Activated naive CD4-positive, alpha-beta T cell treated with anti-CD3 and anti-CD28 coated beads for 36 hours (primary cell): ENCODE measurements at regions of chr16 and their contacts with region 1.

Region 1: GRCh38 chr16:88452482-88453216 is 431 bp upstream of the ZFPM1 start:
- DNase-seq: peak; percentile 98
- H3K4me3 Mint-ChIP-seq: peak overlapping the region; percentile 78
- H3K27ac Mint-ChIP-seq: peak overlapping the region; percentile 80
- H3K4me1 Mint-ChIP-seq: peaks cover 22% of the 10 kb centered on the region
- H3K27me3 Mint-ChIP-seq: no peaks in the 10 kb centered on the region

Region 2: DNA sequence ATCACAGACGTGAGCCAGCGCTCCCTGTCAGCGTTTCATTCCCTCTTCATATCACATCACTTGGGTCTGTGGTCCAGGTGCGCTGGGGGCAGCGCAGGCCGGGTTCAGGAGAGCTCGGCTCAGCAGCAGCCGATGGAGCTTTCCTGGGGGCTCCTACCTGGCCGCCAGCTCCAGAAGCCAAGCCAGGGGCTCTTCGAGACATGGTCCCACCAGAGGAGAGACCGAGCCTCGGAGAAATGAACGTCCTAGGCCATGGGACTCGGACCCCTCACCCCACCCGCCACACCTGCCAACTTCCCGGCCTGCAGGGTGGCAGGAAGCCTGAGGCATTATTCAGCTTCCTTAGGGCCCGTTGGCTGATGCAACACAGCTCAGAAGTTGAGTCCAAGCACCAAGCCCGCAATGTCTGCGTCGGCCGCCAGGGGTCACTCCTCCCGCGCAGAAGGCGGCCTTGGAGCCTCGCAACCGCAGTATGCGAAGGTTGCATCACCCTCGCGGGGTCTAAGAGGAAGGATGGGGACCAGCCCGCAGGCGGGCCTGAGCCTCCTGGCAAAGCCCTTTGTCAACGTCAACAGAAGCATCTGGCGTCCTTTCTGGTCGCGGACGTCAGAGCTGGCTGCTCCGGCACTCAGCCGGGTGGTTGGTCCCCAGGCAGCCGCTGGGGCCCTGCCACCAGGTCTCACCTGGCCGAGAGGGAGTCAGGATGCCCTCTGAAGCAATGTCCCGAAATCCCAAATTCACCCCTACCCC is 673.6 kb before region 1 on chr16:
- CTCF ChIA-PET with region 1: no interaction called
- intact Hi-C with region 1: loop called (anchors 5 kb)
- DNase-seq: peak; percentile 98
- H3K4me3 Mint-ChIP-seq: peak overlapping the region; percentile 89
- H3K27ac Mint-ChIP-seq: peak overlapping the region; percentile 99
- H3K4me1 Mint-ChIP-seq: peaks cover 48% of the 10 kb centered on the region
- H3K27me3 Mint-ChIP-seq: no peaks in the 10 kb centered on the region

Region 3: DNA sequence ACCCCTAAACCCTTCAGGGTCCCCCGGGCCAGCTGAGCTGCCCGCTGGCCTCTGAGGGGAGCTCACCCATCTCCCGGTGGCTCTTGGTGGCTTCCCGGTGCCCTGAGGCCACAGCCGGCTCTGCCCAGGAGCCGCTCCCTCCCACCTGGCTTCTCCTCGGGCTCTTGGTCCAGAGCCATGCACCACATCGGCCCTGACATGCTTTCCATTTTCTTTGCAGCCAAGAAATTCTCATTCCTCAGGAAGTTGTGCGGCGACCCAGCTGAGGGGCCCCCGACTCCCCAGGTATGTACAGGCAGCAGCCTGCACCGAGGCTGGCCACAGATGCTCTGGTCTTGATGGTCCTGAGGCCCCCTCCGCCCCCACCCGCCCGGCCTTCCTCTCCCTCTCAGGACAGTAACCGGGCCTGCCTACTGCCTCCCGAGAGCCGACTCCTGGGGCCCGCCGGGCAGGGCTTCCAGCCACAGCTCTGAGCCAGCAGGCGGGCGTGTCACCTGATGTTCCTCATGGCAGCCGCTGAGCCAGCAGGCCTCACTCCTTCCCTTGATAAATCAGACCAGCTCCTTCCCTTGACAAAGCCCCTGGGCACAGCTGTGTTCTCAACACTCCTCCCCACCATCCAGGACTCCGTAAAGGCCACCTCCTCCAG is 27.9 kb before region 1 on chr16:
- CTCF ChIA-PET with region 1: no interaction called
- intact Hi-C with region 1: no loop called
- DNase-seq: no peak
- H3K4me3 Mint-ChIP-seq: no peak overlapping the region
- H3K27ac Mint-ChIP-seq: no peak overlapping the region
- H3K4me1 Mint-ChIP-seq: peaks cover under 1% of the 10 kb centered on the region
- H3K27me3 Mint-ChIP-seq: no peaks in the 10 kb centered on the region

Region 4: GRCh38 chr16:88466175-88466862 is 13.7 kb after region 1 on chr16:
- CTCF ChIA-PET with region 1: interaction called, 3 read pairs
- intact Hi-C with region 1: loop called (anchors 1 kb)
- DNase-seq: peak; percentile 36
- H3K4me3 Mint-ChIP-seq: no peak overlapping the region
- H3K27ac Mint-ChIP-seq: no peak overlapping the region
- H3K4me1 Mint-ChIP-seq: peaks cover 60% of the 10 kb centered on the region
- H3K27me3 Mint-ChIP-seq: no peaks in the 10 kb centered on the region

Region 5: DNA sequence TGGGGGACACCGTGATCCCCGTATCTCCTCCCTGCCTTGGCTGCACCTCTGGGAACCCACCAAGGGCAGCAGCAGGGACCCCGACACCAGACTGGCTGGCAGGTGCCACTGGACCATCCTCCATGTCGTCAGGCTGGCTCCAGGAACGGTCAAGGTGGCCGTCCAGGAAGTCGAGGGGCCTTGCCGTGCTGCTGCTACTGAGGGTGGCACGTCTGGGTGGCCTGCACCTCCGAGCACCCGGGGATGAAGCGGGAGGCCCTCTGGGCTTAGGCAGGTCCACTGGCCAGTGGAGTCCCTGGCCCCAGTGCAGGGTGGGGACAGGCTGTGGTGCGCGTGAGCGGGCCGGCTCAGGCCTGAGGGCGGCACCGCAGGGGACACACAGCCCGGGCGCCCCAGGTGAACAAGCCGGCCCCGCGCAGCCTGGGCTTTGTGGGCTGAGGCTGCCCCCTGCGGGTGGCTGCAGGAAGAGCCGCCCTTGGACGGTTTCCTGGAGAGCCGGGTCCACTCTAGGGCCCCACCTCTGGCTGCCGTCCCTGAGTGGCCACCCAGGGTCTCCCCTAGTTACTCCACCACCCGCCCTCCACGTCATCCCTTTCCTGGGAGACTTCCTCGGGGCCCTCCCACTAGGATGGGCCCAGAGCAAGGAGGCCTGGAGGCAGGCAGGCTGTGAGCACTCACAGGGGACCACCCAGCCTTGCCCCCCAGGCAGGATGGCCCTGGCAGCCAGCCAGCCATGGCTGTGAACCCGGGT is 74.7 kb after region 1 on chr16:
- CTCF ChIA-PET with region 1: no interaction called
- intact Hi-C with region 1: loop called (anchors 2 kb)
- DNase-seq: peak; percentile 66
- H3K4me3 Mint-ChIP-seq: no peak overlapping the region
- H3K27ac Mint-ChIP-seq: no peak overlapping the region
- H3K4me1 Mint-ChIP-seq: peaks cover 1% of the 10 kb centered on the region
- H3K27me3 Mint-ChIP-seq: no peaks in the 10 kb centered on the region

Region 6: DNA sequence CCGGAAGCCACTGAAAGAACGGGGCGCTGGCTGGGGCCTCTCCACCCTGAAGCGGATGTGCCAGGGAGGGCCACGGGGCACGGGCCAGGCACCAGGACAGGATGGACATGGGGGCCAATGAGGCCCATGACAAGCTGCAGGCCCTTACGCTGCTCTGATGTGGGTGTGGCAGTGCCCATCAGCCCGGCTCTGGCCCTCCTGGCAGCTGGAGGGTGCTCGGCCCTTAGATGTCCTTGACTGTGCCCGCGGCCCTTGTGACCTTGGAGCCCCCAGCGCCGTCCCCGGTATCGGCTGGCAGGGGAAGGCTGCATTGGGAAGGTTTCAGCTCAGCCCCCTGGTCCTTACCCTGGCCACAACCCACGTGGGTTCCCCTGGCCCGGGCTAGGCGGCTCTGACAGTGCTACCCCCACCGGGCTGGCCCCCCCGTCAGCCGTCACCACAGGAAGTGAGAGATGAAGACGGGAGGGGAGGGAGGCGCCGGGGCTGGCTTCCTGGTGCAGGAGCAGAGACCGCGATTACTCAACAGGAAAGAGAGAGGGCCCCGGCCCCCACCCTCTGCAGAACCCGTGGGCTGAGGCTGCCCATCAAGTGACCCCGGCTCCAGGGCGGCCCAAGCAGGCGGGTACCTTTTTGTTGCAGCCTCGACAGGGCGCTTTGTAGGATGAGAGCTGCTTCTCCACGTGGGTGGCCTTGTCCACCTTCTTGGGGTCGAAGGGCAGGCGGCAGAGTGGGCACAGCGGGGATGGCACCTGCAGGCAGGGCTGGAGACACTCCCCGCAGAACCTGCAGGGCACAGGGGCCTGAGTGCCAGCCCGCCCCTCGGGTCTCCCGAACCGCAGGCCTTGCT is 248.2 kb after region 1 on chr16:
- CTCF ChIA-PET with region 1: no interaction called
- intact Hi-C with region 1: loop called (anchors 2 kb)
- DNase-seq: peak; percentile 98
- H3K4me3 Mint-ChIP-seq: peak overlapping the region; percentile 84
- H3K27ac Mint-ChIP-seq: peak overlapping the region; percentile 98
- H3K4me1 Mint-ChIP-seq: peaks cover 71% of the 10 kb centered on the region
- H3K27me3 Mint-ChIP-seq: no peaks in the 10 kb centered on the region